CD8-positive, alpha-beta T cell (primary cell): ENCODE measurements at regions of chr9 and their contacts with region 1.

Region 1: GRCh38 chr9:112333639-112334431 is 416 bp upstream of the PTBP3 start:
- DNase-seq: peak; percentile 89 to 98 (median 94)
- ATAC-seq: peak; percentile 83
- H3K4me3 ChIP-seq: peak overlapping the region; percentile 87 to 99
- H3K4me3 Mint-ChIP-seq: peak overlapping the region; percentile 79
- H3K27ac ChIP-seq: peak overlapping the region; percentile 88 to 93
- H3K27ac Mint-ChIP-seq: peak overlapping the region; percentile 92
- H3K4me1 ChIP-seq: peaks cover 30% of the 10 kb centered on the region
- H3K4me1 Mint-ChIP-seq: peaks cover 38% of the 10 kb centered on the region
- H3K27me3 ChIP-seq: no peaks in the 10 kb centered on the region
- H3K27me3 Mint-ChIP-seq: no peaks in the 10 kb centered on the region
- CTCF ChIP-seq: peak; percentile 20

Region 2: DNA sequence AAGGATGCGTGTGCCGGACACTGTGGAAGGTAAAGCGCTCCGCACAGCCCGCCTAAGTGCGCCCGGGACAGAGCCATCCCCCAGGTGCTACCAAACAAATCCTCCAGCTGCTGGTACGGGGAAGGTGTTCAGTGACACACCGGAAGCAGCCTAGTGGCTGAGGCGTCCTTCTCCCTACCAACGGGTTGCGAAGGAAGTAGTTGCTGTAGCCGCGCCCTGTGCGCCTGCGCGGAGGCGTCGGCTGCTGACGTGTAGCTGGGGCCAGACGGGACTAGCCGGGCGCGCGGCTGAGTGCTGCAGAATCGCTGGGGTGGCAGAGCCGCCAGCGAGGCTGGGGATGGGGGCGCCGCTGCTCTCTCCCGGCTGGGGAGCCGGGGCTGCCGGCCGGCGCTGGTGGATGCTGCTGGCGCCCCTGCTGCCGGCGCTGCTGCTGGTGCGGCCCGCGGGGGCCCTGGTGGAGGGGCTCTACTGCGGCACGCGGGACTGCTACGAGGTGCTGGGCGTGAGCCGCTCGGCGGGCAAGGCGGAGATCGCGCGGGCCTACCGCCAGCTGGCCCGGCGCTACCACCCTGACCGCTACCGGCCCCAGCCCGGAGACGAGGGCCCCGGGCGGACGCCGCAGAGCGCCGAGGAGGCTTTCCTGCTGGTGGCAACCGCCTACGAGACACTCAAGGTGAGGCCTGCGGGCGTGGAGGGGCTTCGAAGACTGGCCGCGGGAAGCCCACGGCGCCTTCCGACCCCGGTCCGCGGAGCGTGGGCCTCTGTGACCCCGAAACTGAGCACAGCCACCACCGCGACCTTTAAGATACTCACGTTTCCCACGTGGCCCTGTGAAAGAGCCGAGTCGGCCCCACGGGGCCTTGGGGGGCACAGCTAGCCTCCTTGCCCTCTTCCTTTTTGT is 702.5 kb before region 1 on chr9 and contains the start of gene DNAJC25:
- CTCF ChIA-PET with region 1: no interaction called
- POLR2A ChIA-PET with region 1: interaction called, 4 read pairs
- intact Hi-C with region 1: loop called (anchors 1 to 2 kb)
- DNase-seq: peak; percentile 92 to 99 (median 96)
- ATAC-seq: peak; percentile 94
- H3K4me3 ChIP-seq: peak within 1 kb of the TSS; percentile 50 to 69
- H3K4me3 Mint-ChIP-seq: peak within 1 kb of the TSS; percentile 98
- H3K27ac ChIP-seq: peak within 1 kb of the TSS; percentile 78 to 80
- H3K27ac Mint-ChIP-seq: peak within 1 kb of the TSS; percentile 92
- H3K4me1 ChIP-seq: peaks cover 18% of the 10 kb centered on the region
- H3K4me1 Mint-ChIP-seq: peaks cover 47% of the 10 kb centered on the region
- H3K27me3 ChIP-seq: no peaks in the 10 kb centered on the region
- H3K27me3 Mint-ChIP-seq: no peaks in the 10 kb centered on the region
- CTCF ChIP-seq: no peak
- total RNA-seq, gene DNAJC25: 5.8 to 7.2 TPM

Region 3: GRCh38 chr9:112097712-112098688 is 235.8 kb before region 1 on chr9:
- CTCF ChIA-PET with region 1: interaction called, 8 read pairs
- POLR2A ChIA-PET with region 1: interaction called, 3 read pairs
- intact Hi-C with region 1: loop called in 1 of 2 experiments (anchors 1 kb)
- DNase-seq: peak; percentile 41 to 84 (median 65)
- ATAC-seq: peak; percentile 78
- H3K4me3 ChIP-seq: no peak overlapping the region
- H3K4me3 Mint-ChIP-seq: no peak overlapping the region
- H3K27ac ChIP-seq: no peak overlapping the region
- H3K27ac Mint-ChIP-seq: no peak overlapping the region
- H3K4me1 ChIP-seq: peaks cover 4% of the 10 kb centered on the region
- H3K4me1 Mint-ChIP-seq: peaks cover 20% of the 10 kb centered on the region
- H3K27me3 ChIP-seq: no peaks in the 10 kb centered on the region
- H3K27me3 Mint-ChIP-seq: no peaks in the 10 kb centered on the region
- CTCF ChIP-seq: peak; percentile 89

Region 4: GRCh38 chr9:112288029-112288428 is 45.8 kb before region 1 on chr9:
- CTCF ChIA-PET with region 1: no interaction called
- POLR2A ChIA-PET with region 1: no interaction called
- intact Hi-C with region 1: loop called in 1 of 2 experiments (anchors 5 kb)
- DNase-seq: no peak
- ATAC-seq: no peak
- H3K4me3 ChIP-seq: no peak overlapping the region
- H3K4me3 Mint-ChIP-seq: no peak overlapping the region
- H3K27ac ChIP-seq: no peak overlapping the region
- H3K27ac Mint-ChIP-seq: peak overlapping the region; percentile 60
- H3K4me1 ChIP-seq: no peaks in the 10 kb centered on the region
- H3K4me1 Mint-ChIP-seq: peaks cover 35% of the 10 kb centered on the region
- H3K27me3 ChIP-seq: no peaks in the 10 kb centered on the region
- H3K27me3 Mint-ChIP-seq: no peaks in the 10 kb centered on the region
- CTCF ChIP-seq: no peak

Region 5: GRCh38 chr9:112361601-112362000 is 27.8 kb after region 1 on chr9:
- CTCF ChIA-PET with region 1: interaction called, 6 read pairs
- POLR2A ChIA-PET with region 1: interaction called, 3 read pairs
- intact Hi-C with region 1: loop called (anchors 2 to 5 kb)
- DNase-seq: peak in 3 of 9 experiments; percentile 40 to 67 (median 59)
- ATAC-seq: no peak
- H3K4me3 ChIP-seq: no peak overlapping the region
- H3K4me3 Mint-ChIP-seq: no peak overlapping the region
- H3K27ac ChIP-seq: no peak overlapping the region
- H3K27ac Mint-ChIP-seq: no peak overlapping the region
- H3K4me1 ChIP-seq: no peaks in the 10 kb centered on the region
- H3K4me1 Mint-ChIP-seq: peaks cover 4% of the 10 kb centered on the region
- H3K27me3 ChIP-seq: no peaks in the 10 kb centered on the region
- H3K27me3 Mint-ChIP-seq: peaks cover 2% of the 10 kb centered on the region
- CTCF ChIP-seq: peak; percentile 78

Region 6: DNA sequence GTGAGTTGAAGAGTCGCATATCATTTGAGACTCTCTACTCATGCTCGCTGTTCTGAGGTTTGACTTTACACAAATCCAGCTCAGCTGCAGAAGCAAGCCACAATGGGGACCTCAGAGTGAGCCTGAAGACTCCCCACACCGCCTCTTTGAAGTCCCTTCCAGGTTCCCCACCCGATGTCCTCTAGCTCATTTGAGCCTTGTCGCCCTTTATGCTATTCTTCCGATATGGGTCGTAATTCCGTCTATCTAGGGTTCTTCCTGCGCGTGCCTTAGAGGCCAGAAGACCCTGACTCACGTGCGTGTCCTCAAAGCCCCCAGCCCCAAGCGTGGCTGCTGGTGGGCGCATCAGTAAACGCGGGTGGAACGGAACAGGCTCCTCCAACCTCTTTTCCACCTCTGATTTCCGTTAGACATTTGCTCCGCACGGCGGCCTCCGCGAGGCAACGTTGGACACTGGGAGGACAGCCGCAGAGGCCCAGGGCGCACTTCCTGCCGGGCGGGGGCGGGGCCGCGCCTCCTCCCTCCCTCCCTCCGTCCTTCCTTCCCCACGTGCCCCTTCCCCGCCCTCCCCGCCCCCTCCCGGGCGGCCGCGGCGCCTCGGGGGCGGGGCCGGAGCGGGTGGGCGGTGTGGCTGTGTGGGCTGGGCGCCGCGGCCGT is 416.4 kb after region 1 on chr9 and contains the start of gene SNX30:
- CTCF ChIA-PET with region 1: no interaction called
- POLR2A ChIA-PET with region 1: no interaction called
- intact Hi-C with region 1: loop called (anchors 1 to 5 kb)
- DNase-seq: peak; percentile 42 to 91 (median 78)
- ATAC-seq: peak; percentile 67
- H3K4me3 ChIP-seq: peak within 1 kb of the TSS; percentile 66 to 72
- H3K4me3 Mint-ChIP-seq: peak within 1 kb of the TSS; percentile 91
- H3K27ac ChIP-seq: peak within 1 kb of the TSS; percentile 44 to 83
- H3K27ac Mint-ChIP-seq: peak within 1 kb of the TSS; percentile 94
- H3K4me1 ChIP-seq: peaks cover 47% of the 10 kb centered on the region
- H3K4me1 Mint-ChIP-seq: peaks cover 64% of the 10 kb centered on the region
- H3K27me3 ChIP-seq: no peaks in the 10 kb centered on the region
- H3K27me3 Mint-ChIP-seq: no peaks in the 10 kb centered on the region
- CTCF ChIP-seq: no peak
- total RNA-seq, gene SNX30: 6.0 to 8.1 TPM